Left cardiac atrium (tissue), 4 donors: ENCODE measurements at regions of chr1 and their contacts with region 1.

Region 1: GRCh38 chr1:235075188-235075926 is 53.3 kb downstream of the TOMM20 start:
- DNase-seq: peak; percentile 85
- ATAC-seq: peak; percentile 60 to 74

Region 2: DNA sequence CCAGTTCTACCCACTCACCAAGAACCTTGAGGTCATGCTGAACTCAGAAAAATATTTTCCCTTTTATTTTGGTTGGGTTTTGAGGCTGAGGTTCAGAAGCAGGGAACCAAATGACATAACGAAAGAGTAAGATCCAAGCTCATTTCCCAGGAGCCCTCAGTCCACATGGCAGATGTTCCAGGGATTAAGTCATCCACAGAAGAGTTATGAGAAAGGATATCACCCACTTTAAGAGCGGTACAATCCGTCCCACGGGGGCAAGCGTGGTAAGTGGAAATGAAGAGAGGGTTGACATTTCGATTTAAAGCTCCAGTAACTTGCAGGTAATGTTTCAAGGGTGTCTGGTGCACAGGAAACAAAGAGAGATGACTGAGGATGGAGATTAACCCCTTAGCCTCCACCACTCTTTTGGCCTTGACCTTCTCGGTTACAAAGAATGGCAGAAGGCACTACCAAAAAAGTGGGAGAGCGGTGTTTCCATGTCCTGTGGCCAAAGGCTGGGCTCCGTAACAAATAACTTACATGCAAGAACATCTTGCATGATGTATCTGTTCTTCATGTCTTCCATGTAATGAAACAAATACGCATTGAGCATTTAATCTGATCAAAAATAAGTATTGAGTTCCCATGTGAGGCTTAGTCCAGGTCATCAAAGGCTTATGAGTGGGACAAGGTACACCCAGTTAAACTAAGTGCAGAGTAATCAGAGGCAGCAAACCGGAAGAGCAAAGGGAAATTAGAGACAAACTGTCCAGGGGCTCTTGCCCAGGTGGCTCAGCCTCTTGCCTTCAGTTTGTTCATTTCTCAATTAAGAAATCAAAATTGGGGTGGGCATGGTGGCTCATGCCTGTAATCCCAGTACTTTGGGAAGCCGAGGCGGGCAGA is 188.1 kb before region 1 on chr1:
- intact Hi-C with region 1: loop called in 1 of 2 experiments (anchors 2 kb)
- DNase-seq: peak; percentile 74
- ATAC-seq: peak; percentile 72 to 77

Region 3: DNA sequence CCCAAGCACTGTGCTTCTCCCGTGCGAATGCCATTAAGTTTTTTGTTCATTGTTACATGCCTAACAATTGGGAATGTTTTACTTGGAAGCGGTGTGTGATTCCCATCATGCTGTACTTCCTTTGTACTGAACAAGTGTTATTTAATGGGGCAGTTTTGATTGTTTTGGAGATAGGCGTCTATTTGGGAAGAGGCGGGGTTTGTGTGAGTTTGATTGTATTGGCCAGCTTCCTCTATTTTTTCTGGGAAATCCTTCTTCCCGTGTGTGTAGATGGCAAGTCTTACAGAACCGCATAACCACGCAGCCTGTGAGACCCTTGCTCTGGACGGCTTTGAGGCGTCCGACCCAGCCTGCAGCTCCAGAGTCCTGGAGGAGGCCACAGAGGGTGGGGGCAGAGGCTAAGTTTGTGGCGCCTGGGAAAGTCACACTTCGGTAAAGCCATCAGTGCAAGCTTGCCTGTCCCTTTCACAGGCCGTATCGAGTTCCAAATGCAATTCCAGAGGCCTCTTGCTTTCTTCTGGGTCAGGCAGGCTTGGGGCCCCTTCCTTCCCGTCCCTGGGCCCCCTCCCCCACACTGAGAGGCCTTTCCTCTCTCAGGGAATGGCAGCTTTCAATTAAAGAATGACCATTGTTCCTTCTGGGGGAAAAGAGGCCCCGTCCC is 157.0 kb before region 1 on chr1:
- intact Hi-C with region 1: loop called (anchors 10 kb)
- DNase-seq: peak; percentile 61
- ATAC-seq: peak; percentile 15 to 60

Region 4: DNA sequence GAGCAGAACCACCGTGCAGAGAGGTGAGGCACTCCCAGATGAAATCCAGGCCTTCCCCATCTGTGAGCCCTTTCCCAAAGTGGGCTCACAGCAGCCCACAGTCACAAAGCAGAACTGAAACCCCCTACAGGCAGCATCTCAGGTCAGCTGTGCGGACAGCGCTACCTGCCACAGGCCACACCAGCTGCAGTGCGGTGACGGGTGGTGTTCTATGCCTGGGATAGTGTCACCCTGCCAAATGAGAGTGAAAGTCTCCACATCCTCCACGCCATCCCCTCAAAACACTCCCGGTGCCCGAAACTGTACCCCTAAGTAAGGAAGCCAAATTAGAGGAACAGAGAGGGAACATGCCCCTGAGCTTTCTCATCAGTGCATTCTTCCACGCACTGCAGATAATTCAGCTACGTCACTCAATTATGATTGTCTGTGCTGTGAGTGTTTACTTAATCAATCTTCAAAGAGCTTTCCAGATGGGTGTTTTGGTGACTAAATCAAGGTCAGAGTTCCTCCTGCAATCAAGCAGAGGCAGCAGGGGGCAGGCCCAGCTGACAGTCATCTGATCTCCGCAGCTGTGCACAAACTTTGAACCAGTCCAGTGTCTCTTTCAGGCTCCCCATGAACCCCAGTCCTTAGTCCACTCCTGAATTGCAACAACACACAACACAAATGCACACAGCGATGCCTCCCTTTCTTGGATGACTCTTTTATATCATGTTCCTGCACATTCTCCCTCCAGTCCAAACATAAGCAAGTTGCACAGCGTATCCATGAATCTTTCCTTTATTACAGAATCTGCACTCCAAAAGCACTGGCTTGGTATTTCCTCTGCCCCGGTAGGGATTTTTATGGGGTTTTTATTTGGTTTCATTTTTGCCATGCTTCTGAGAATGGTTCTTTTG is 96.7 kb before region 1 on chr1:
- intact Hi-C with region 1: loop called in 1 of 2 experiments (anchors 5 kb)
- DNase-seq: peak; percentile 58
- ATAC-seq: peak; percentile 35 to 43

Region 5: DNA sequence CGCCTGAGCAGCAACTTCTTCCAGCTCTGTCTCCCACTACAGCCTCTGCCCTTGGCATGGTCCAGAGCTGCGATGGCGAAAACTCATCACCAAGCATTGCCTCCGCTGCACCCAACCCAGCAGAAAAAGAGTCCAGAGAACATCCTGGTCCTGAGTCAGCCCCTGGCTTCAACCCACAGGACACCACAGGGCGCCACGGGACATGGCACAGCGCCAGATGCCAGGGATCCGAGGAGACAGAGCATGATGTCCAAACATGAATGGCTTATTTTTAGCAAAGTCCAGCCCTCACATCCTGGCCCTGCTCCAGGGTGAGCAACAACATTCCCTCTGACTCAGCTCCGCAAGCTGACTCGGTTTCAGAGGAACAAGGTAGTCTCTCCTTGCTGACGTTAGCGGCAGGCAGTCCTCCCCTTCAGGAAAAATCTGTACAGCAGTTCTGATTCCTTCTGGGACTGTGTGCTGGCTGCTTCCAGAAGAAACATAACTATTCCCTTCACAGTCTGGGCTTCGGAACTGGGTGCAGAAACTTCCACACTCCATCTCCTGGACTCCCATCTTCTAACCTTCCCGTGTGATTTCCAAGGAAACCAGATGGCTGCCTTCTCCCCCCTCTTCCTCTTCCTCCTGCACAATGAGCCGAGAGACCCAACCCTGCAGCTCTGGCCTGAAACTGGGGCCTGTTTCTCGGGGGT is 78.0 kb before region 1 on chr1:
- intact Hi-C with region 1: loop called (anchors 2 to 5 kb)
- DNase-seq: peak; percentile 99
- ATAC-seq: peak; percentile 95 to 96

Region 6: DNA sequence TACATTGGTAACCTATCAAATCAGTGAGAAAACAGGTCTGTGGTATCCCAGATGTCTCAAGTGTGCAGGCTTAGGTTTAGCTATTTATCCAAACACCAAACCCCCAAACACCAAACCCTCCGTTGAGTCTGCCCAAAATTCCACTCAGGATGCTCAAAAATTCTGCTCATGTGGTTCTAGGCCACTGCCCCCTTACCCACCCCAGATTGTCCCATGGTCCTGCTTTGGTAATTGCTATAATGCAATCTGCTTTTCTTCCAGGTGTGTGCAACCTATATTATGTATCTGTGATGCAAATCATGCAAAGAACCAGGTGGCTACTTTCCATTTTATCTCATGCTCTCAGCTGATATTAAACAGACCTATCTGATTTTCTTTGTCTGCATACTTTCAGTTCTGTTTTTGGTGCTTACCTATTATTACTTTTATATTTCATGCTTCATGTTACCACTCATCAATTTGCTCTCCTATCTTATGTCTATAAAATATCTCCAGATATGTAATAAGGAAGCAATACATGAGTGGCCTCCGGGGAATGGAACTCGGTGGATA is 70.4 kb before region 1 on chr1:
- intact Hi-C with region 1: loop called in 1 of 2 experiments (anchors 5 kb)
- DNase-seq: no peak
- ATAC-seq: no peak

Region 7: DNA sequence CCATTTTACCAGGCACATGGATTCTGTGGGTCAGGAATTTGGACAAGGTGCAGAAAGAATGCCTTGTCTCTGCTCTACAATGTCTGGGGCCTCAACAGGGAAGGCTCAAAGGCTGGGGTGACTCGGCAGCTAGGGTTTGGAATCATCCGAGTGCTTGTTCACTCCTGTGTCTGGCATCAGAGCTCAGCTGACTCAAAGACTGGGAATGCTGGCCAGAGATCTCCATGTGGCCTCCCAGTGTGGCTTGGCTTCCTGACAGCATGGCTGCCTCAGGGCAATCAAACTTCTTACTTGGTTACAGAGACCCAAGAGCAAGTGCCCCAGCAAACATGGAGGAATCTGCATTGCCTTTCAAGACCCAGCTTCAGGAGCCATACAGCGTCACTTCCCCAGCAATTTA is 57.2 kb before region 1 on chr1:
- intact Hi-C with region 1: no loop called
- DNase-seq: no peak
- ATAC-seq: peak in 1 of 2 donors; percentile 72